ENCODE measurements at regions of chr2 and their contacts with region 1.

Region 1: GRCh38 chr2:96801005-96801785 is 14.9 kb upstream of the CNNM3 start:
- DNase-seq: peak; percentile 84
- ATAC-seq: peak; percentile 98
- H3K4me3 Mint-ChIP-seq: no peak overlapping the region
- H3K27ac Mint-ChIP-seq: no peak overlapping the region
- H3K4me1 Mint-ChIP-seq: peaks cover 3% of the 10 kb centered on the region
- H3K27me3 Mint-ChIP-seq: no peaks in the 10 kb centered on the region
- CTCF ChIP-seq: peak; percentile 90

Region 2: GRCh38 chr2:96730212-96730611 is 71.0 kb before region 1 on chr2:
- CTCF ChIA-PET with region 1: no interaction called
- POLR2A ChIA-PET with region 1: no interaction called
- intact Hi-C with region 1: no loop called
- DNase-seq: no peak
- ATAC-seq: no peak
- H3K4me3 Mint-ChIP-seq: no peak overlapping the region
- H3K27ac Mint-ChIP-seq: peak overlapping the region; percentile 23
- H3K4me1 Mint-ChIP-seq: no peaks in the 10 kb centered on the region
- H3K27me3 Mint-ChIP-seq: no peaks in the 10 kb centered on the region
- CTCF ChIP-seq: no peak

Region 3: GRCh38 chr2:96783388-96783787 is 17.8 kb before region 1 on chr2:
- CTCF ChIA-PET with region 1: interaction called, 14 read pairs
- POLR2A ChIA-PET with region 1: no interaction called
- intact Hi-C with region 1: no loop called
- DNase-seq: no peak
- ATAC-seq: no peak
- H3K4me3 Mint-ChIP-seq: no peak overlapping the region
- H3K27ac Mint-ChIP-seq: no peak overlapping the region
- H3K4me1 Mint-ChIP-seq: peaks cover 4% of the 10 kb centered on the region
- H3K27me3 Mint-ChIP-seq: no peaks in the 10 kb centered on the region
- CTCF ChIP-seq: no peak

Region 4: GRCh38 chr2:96816128-96816835 is 15.1 kb after region 1 on chr2 and contains the start of gene CNNM3:
- CTCF ChIA-PET with region 1: interaction called, 16 read pairs
- POLR2A ChIA-PET with region 1: interaction called, 3 read pairs
- intact Hi-C with region 1: no loop called
- DNase-seq: peak; percentile 96
- ATAC-seq: peak; percentile 95
- H3K4me3 Mint-ChIP-seq: peak within 1 kb of the TSS; percentile 80
- H3K27ac Mint-ChIP-seq: peak within 1 kb of the TSS; percentile 69
- H3K4me1 Mint-ChIP-seq: peaks cover 47% of the 10 kb centered on the region
- H3K27me3 Mint-ChIP-seq: no peaks in the 10 kb centered on the region
- CTCF ChIP-seq: peak; percentile 61
- total RNA-seq, gene CNNM3: 15.8 to 19.3 TPM